ENCODE measurements at regions of chr1 and their contacts with region 1.

Region 1: DNA sequence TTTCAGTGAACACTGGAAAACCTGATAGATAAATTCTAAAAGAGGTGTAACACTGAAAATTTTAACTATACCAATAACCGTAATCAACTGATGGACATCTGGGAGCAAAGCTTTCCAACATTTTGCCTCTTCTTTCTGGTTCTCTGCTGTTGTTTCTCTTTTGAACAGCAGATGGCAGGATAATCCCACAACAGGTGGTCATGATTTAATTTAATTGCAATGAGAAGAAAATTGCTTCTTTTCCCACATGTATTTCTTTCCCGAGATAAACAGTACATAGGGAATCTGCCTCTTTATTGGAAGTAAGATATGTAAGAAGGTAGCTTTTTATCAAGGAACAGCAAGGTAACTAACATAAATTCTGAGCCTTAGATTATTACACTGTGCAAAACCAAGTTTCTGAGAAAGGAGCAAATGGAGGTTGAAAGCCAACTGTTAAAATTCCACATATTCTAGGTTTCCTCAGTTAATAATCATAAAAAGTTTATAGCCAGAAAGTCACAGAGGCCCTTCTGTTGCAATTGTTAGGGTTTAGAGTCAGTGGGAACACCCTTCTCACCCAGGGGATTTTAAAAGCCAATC is 72.9 kb downstream of the RPS6KA1 start:
- DNase-seq: peak; percentile 62
- H3K4me3 Mint-ChIP-seq: no peak overlapping the region
- H3K27ac Mint-ChIP-seq: no peak overlapping the region
- H3K4me1 Mint-ChIP-seq: peaks cover 8% of the 10 kb centered on the region
- H3K27me3 Mint-ChIP-seq: peaks cover 3% of the 10 kb centered on the region

Region 2: DNA sequence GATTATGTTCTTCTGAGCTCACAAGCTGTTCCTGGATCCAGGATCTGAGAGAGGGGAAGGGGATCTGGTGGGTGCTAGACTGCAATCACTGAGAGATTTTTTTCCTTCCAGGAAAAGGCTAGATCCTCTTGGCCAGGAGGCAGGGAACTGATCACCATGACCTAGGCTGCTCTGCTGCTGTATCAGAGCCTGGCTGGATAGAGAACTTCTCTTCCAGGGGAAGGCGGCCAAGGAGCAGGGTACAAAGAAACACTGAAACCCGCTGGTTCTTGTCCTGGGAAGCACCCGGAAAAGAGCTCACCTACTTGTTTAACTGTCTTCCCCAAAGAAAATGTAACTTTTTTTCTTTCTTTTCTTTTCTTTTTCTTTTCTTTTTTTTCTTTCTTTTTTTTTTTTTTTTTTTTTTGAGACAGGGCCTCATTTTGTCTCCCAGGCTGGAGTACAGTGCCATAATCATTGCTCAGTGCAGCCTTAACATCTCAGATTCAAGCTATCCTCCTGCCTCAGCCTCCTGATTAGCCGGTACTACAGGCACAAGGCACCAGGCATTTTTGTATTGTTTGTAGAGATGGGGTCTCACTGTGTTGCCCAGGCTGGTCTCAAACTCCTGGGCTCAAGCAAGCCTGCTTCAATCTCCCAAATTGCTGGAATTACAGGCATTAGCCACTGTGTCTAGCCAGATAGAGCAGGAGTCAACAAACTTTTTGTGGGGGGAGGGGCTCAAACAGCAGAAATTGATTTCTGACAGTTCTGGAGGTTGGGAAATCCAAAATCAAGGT is 85.3 kb before region 1 on chr1:
- CTCF ChIA-PET with region 1: no interaction called
- intact Hi-C with region 1: no loop called
- DNase-seq: no peak
- H3K4me3 Mint-ChIP-seq: no peak overlapping the region
- H3K27ac Mint-ChIP-seq: no peak overlapping the region
- H3K4me1 Mint-ChIP-seq: no peaks in the 10 kb centered on the region
- H3K27me3 Mint-ChIP-seq: no peaks in the 10 kb centered on the region

Region 3: DNA sequence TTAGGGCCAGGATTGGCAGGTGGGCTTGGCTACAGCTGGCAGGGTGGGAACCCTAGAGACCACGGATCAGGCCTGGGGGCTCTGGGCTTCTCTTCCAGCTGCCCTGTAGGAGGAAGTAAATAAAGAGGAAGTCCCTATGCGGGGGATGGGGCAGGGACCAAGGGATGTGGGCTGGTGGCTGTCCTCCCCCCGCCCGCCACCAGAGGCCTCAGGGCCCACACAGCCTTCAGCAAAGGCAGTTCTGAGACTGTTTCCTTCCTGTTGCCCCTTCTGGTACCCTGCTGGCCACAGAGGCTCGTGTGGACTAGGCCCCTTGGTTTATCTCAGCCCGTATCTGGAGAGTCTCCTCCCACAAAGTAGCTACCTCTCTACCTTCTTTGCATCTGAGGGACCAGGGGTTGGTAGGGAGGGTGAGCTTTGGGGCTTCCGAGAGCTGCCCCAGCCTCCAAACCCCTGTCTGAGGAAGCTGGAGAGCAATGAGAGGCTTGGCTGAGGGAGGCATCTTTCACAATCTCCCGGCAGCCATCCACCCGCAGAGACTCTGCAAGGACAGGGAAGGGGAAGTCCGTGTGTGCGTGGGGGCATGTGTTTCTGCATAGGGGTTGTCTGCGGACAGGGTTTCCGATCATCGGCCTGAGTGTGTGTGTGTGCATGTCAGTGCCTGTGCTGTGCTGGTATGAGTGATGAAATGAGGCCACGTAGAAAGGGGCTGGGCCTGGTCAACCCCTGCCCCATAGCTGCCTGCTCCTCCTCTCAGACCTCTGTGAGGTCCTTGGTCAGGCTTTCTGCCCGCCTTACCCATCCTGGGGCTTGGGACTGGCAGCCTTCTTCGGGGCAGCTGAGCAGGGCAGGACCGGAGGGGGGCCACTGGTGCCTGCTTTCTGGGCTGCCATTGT is 60.4 kb before region 1 on chr1:
- CTCF ChIA-PET with region 1: interaction called, 14 read pairs
- intact Hi-C with region 1: no loop called
- DNase-seq: peak; percentile 91
- H3K4me3 Mint-ChIP-seq: peak overlapping the region; percentile 73
- H3K27ac Mint-ChIP-seq: peak overlapping the region; percentile 95
- H3K4me1 Mint-ChIP-seq: peaks cover 81% of the 10 kb centered on the region
- H3K27me3 Mint-ChIP-seq: no peaks in the 10 kb centered on the region

Region 4: GRCh38 chr1:26677306-26678115 is 75.0 kb after region 1 on chr1:
- CTCF ChIA-PET with region 1: interaction called, 28 read pairs
- intact Hi-C with region 1: loop called (anchors 1 kb)
- DNase-seq: peak; percentile 84
- H3K4me3 Mint-ChIP-seq: no peak overlapping the region
- H3K27ac Mint-ChIP-seq: peak overlapping the region; percentile 21
- H3K4me1 Mint-ChIP-seq: peaks cover 16% of the 10 kb centered on the region
- H3K27me3 Mint-ChIP-seq: no peaks in the 10 kb centered on the region

Region 5: GRCh38 chr1:26799479-26800142 is 197.1 kb after region 1 on chr1:
- CTCF ChIA-PET with region 1: interaction called, 21 read pairs
- intact Hi-C with region 1: no loop called
- DNase-seq: peak; percentile 46
- H3K4me3 Mint-ChIP-seq: no peak overlapping the region
- H3K27ac Mint-ChIP-seq: peak overlapping the region; percentile 64
- H3K4me1 Mint-ChIP-seq: peaks cover 33% of the 10 kb centered on the region
- H3K27me3 Mint-ChIP-seq: no peaks in the 10 kb centered on the region

Region 6: DNA sequence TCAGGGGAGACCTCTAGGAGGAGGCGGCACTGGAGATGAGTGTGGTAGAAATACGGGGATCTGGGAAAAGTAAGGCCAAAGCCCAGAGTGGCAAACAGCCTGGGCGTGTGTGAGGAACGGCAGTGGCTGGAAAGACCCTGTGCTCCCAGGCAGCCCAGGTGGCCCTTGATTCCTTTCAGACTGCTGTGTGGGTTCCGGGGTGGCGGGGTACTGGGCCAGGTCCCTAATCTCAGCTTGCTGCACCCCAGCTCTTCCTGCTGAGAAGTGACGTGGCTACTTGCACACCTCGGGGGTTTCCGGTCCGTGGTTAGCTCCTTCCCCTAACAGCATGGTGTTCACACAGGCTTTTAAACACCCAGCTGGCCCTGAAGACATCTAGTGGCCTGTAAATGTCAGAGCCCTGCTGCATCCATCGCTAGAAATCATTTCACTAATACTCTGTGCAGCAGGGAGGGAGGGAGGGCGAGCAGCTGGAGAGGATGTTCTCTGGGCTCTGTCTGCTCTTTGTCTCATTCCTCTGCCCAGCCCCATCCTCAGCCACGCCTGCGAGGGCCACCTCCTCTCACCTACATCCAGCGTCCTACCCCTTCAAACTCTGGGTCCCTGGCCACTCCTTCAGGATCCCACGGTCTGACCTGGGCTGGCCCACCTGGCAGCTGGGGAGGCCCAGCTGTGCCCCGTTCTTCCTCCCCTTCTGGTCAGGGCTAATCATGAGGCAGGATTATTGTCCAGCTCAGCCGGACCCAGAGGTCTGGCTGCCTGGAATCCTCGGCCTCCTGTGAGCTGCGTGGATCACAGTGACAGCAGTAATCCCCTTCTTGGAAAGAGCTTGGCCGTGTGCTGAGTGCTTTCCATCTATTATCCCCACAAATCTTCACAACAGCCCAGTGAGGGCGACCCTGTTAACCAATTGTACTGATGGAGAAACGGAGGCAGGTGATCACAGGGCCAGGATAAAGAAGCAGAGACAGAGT is 231.2 kb after region 1 on chr1:
- CTCF ChIA-PET with region 1: interaction called, 23 read pairs
- intact Hi-C with region 1: no loop called
- DNase-seq: peak; percentile 96
- H3K4me3 Mint-ChIP-seq: peak overlapping the region; percentile 57
- H3K27ac Mint-ChIP-seq: peak overlapping the region; percentile 96
- H3K4me1 Mint-ChIP-seq: peaks cover 59% of the 10 kb centered on the region
- H3K27me3 Mint-ChIP-seq: no peaks in the 10 kb centered on the region

Region 7: DNA sequence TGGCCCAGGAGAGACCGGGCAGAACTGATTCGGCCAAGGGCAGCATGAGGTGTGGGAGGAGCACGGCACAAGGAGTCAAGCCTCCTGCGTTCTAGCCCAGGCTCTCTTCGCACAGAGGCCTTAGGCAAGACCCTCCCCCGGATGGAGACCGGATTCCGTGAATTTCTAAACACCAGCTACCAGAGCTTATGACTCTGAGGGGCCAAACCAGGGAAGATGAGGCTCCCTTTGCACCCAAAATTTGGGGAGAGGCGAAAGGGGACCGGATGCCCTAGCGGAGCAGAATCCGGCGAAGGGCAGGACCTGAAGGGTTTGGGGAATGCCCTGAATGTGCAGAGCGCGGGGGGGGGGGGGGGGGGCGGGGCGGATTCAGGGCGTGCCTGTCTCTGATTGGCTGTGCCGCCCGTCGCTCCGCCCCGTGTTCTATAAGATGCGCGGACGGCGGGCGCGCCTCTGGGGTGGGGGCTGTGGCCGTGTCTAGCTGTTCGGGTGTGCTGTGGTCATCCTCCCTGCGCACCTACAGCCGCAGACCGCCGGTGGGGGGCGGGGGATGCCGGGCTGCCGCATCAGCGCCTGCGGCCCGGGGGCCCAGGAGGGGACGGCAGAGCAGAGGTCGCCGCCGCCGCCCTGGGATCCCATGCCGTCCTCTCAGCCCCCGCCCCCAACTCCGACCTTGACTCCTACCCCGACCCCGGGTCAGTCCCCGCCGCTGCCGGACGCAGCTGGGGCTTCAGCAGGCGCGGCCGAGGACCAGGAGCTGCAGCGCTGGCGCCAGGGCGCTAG is 391.0 kb after region 1 on chr1 and contains the start of gene TRNP1:
- CTCF ChIA-PET with region 1: no interaction called
- intact Hi-C with region 1: loop called (anchors 10 kb)
- DNase-seq: peak; percentile 76
- H3K4me3 Mint-ChIP-seq: peak within 1 kb of the TSS; percentile 77
- H3K27ac Mint-ChIP-seq: no peak within 1 kb of the TSS
- H3K4me1 Mint-ChIP-seq: peaks cover 22% of the 10 kb centered on the region
- H3K27me3 Mint-ChIP-seq: peaks cover 49% of the 10 kb centered on the region
- total RNA-seq, gene TRNP1: 0.20 to 0.43 TPM

Measured in activated naive CD4-positive, alpha-beta T cell treated with anti-CD3 and anti-CD28 coated beads for 36 hours (primary cell).